ENCODE measurements at regions of chr19 and their contacts with region 1.

Region 1: DNA sequence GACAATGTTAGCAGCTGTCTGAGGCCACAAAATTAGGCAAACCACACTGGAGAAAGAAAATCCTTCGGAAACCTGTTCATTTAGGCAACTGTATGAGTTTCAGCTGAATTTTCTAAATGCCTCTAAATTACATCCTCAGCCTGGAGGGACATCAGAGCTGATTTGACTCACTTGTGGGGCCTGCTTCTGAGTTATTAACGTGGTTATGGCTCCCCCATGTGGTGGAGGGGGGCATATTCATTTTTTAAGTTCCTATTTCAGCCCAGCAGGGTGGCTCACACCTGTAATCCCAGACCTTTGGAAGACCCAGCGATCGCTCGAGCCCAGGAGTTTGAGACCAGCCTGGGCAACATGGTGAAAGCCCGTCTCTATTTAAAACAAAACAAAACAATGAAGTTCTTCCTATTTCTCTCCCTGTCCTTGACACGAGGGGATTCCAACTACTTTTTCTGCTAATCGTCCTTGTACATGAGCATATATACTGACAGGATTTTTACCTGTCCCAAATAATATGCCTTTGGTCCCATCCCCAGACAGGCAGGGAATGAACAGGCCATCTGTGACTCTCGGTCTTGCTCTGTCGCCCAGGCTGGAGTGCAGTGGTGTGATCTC is 31.5 kb upstream of the HIF3A start:
- DNase-seq: peak; percentile 70
- ATAC-seq: peak; percentile 92
- H3K4me3 ChIP-seq: no peak overlapping the region
- H3K27ac ChIP-seq: no peak overlapping the region
- H3K4me1 ChIP-seq: no peaks in the 10 kb centered on the region
- H3K27me3 ChIP-seq: peaks cover 0 to 11% of the 10 kb centered on the region in 2 experiments; a peak in 3 of 5 replicates
- CTCF ChIP-seq: peak; percentile 85
- EP300 ChIP-seq: no peak
- POLR2A ChIP-seq: no peak
- RAD21 ChIP-seq: peak; percentile 75

Region 2: GRCh38 chr19:46021531-46022041 is 243.7 kb before region 1 on chr19:
- CTCF ChIA-PET with region 1: no interaction called
- POLR2A ChIA-PET with region 1: no interaction called
- in situ Hi-C with region 1: loop called (anchors 5 kb)
- intact Hi-C with region 1: no loop called
- DNase-seq: no peak
- ATAC-seq: no peak
- H3K4me3 ChIP-seq: no peak overlapping the region
- H3K27ac ChIP-seq: no peak overlapping the region
- H3K4me1 ChIP-seq: peaks cover 5% of the 10 kb centered on the region
- H3K27me3 ChIP-seq: no peaks in the 10 kb centered on the region
- CTCF ChIP-seq: 0 out of 2 replicates have a peak, but pooled peaks have one; percentile 8
- EP300 ChIP-seq: no peak
- POLR2A ChIP-seq: no peak
- RAD21 ChIP-seq: no peak

Region 3: GRCh38 chr19:46030812-46031550 is 234.3 kb before region 1 on chr19:
- CTCF ChIA-PET with region 1: interaction called, 12 read pairs
- POLR2A ChIA-PET with region 1: no interaction called
- in situ Hi-C with region 1: loop called (anchors 5 kb)
- intact Hi-C with region 1: loop called (anchors 1 kb)
- DNase-seq: no peak
- ATAC-seq: no peak
- H3K4me3 ChIP-seq: no peak overlapping the region
- H3K27ac ChIP-seq: no peak overlapping the region
- H3K4me1 ChIP-seq: peaks cover 22% of the 10 kb centered on the region
- H3K27me3 ChIP-seq: no peaks in the 10 kb centered on the region
- CTCF ChIP-seq: no peak
- EP300 ChIP-seq: no peak
- POLR2A ChIP-seq: no peak
- RAD21 ChIP-seq: no peak

Region 4: DNA sequence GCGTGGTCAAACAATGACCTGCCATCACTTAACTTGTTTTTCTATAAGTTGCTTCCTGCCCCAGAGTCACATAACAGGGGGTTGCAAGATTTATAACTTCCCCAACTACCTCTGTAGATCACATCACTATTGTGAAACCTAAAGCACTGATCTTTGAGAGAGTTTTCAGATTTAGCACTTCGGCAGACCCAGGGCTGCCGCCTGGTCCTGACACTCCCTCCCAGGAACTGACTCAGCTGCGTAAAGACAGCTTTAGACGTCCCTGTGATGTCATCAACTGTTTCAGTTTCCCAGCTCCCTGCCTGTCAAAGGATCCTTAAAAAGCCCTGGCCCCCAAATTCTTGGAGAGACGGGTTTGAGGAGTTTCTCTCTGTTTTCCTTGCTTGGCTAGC is 83.9 kb before region 1 on chr19:
- CTCF ChIA-PET with region 1: no interaction called
- POLR2A ChIA-PET with region 1: no interaction called
- in situ Hi-C with region 1: no loop called
- intact Hi-C with region 1: loop called (anchors 10 kb)
- DNase-seq: no peak
- ATAC-seq: no peak
- H3K4me3 ChIP-seq: no peak overlapping the region
- H3K27ac ChIP-seq: no peak overlapping the region
- H3K4me1 ChIP-seq: no peaks in the 10 kb centered on the region
- H3K27me3 ChIP-seq: peaks cover 0 to 13% of the 10 kb centered on the region in 2 experiments; a peak in 3 of 5 replicates
- CTCF ChIP-seq: no peak
- EP300 ChIP-seq: no peak
- POLR2A ChIP-seq: no peak
- RAD21 ChIP-seq: no peak